CD8-positive, alpha-beta T cell (primary cell): ENCODE measurements at regions of chr2 and their contacts with region 1.

Region 1: GRCh38 chr2:54558188-54559005 is 102.3 kb downstream of the SPTBN1 start:
- DNase-seq: peak; percentile 43 to 85 (median 69)
- ATAC-seq: peak; percentile 67
- H3K4me3 ChIP-seq: peak overlapping the region; percentile 92 to 94
- H3K4me3 Mint-ChIP-seq: peak overlapping the region; percentile 98
- H3K27ac ChIP-seq: peak overlapping the region; percentile 81 to 82
- H3K27ac Mint-ChIP-seq: peak overlapping the region; percentile 93
- H3K4me1 ChIP-seq: peaks cover 35% of the 10 kb centered on the region
- H3K4me1 Mint-ChIP-seq: peaks cover 64% of the 10 kb centered on the region
- H3K27me3 ChIP-seq: no peaks in the 10 kb centered on the region
- H3K27me3 Mint-ChIP-seq: no peaks in the 10 kb centered on the region
- CTCF ChIP-seq: no peak

Region 2: GRCh38 chr2:54570925-54571694 is 12.7 kb after region 1 on chr2:
- CTCF ChIA-PET with region 1: interaction called, 29 read pairs
- POLR2A ChIA-PET with region 1: interaction called, 91 read pairs
- intact Hi-C with region 1: loop called (anchors 1 kb)
- DNase-seq: peak; percentile 23 to 87 (median 69)
- ATAC-seq: peak; percentile 8
- H3K4me3 ChIP-seq: peak overlapping the region; percentile 13 to 21
- H3K4me3 Mint-ChIP-seq: peak overlapping the region; percentile 81
- H3K27ac ChIP-seq: peak overlapping the region; percentile 87 to 94
- H3K27ac Mint-ChIP-seq: peak overlapping the region; percentile 100
- H3K4me1 ChIP-seq: peaks cover 94% of the 10 kb centered on the region
- H3K4me1 Mint-ChIP-seq: peaks cover 95% of the 10 kb centered on the region
- H3K27me3 ChIP-seq: no peaks in the 10 kb centered on the region
- H3K27me3 Mint-ChIP-seq: no peaks in the 10 kb centered on the region
- CTCF ChIP-seq: no peak

Region 3: DNA sequence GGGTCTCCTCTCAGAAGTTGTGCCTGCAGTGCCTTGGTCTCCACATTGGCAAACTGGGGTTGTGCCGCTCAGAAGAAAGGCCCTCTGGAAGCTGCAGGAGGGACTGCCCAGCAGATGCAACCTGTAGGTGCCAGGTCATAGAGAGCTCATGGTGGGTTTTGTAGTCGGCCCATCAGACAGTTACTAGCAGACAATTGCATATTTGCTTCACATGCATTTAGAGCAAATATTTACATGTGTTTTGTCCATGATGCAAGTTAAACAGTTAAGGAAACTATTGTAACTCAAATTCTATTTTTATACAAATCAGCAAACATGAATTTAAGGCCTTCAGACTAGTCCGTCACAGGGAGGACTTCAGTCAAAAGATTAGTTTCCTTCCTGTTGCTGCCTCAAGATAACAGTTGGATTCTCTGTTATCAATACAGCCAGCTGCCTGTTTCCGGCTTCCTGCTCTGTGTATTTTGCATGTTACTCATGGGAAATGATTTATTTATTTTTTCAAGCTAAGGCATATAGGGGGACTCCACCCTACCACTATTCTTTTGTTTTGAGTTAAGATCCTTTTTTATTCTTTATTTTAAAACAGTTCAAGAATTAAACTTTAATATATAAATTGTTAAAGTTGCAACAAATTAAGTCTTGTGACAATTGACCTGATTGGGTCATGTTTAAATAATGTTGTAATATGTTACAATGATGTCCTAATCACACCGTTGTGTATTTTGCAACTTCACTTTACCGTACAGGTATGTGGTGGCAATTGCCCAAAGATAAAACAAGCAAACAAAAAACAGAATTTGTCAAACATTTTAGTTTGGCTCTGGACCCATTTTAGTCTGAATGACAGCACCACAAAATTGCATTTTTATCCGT is 31.2 kb after region 1 on chr2:
- CTCF ChIA-PET with region 1: interaction called, 16 read pairs
- POLR2A ChIA-PET with region 1: interaction called, 34 read pairs
- intact Hi-C with region 1: no loop called
- DNase-seq: peak in 5 of 9 experiments; percentile 43 to 71 (median 48)
- ATAC-seq: peak; percentile 59
- H3K4me3 ChIP-seq: peak overlapping the region in 1 of 2 experiments; percentile 46
- H3K4me3 Mint-ChIP-seq: peak overlapping the region; percentile 72
- H3K27ac ChIP-seq: peak overlapping the region; percentile 60
- H3K27ac Mint-ChIP-seq: peak overlapping the region; percentile 92
- H3K4me1 ChIP-seq: peaks cover 88% of the 10 kb centered on the region
- H3K4me1 Mint-ChIP-seq: peaks cover 96% of the 10 kb centered on the region
- H3K27me3 ChIP-seq: no peaks in the 10 kb centered on the region
- H3K27me3 Mint-ChIP-seq: no peaks in the 10 kb centered on the region
- CTCF ChIP-seq: no peak

Region 4: GRCh38 chr2:54606393-54606969 is 48.1 kb after region 1 on chr2:
- CTCF ChIA-PET with region 1: interaction called, 13 read pairs
- POLR2A ChIA-PET with region 1: interaction called, 36 read pairs
- intact Hi-C with region 1: no loop called
- DNase-seq: peak in 4 of 9 experiments; percentile 17 to 54 (median 44)
- ATAC-seq: peak; percentile 79
- H3K4me3 ChIP-seq: no peak overlapping the region
- H3K4me3 Mint-ChIP-seq: peak overlapping the region; percentile 13
- H3K27ac ChIP-seq: no peak overlapping the region
- H3K27ac Mint-ChIP-seq: peak overlapping the region; percentile 92
- H3K4me1 ChIP-seq: peaks cover 77% of the 10 kb centered on the region
- H3K4me1 Mint-ChIP-seq: peaks cover 86% of the 10 kb centered on the region
- H3K27me3 ChIP-seq: no peaks in the 10 kb centered on the region
- H3K27me3 Mint-ChIP-seq: no peaks in the 10 kb centered on the region
- CTCF ChIP-seq: no peak

Region 5: GRCh38 chr2:54704688-54705605 is 146.6 kb after region 1 on chr2:
- CTCF ChIA-PET with region 1: interaction called, 12 read pairs
- POLR2A ChIA-PET with region 1: interaction called, 4 read pairs
- intact Hi-C with region 1: no loop called
- DNase-seq: peak in 2 of 9 experiments; percentile 71 to 78
- ATAC-seq: peak; percentile 66
- H3K4me3 ChIP-seq: no peak overlapping the region
- H3K4me3 Mint-ChIP-seq: no peak overlapping the region
- H3K27ac ChIP-seq: no peak overlapping the region
- H3K27ac Mint-ChIP-seq: no peak overlapping the region
- H3K4me1 ChIP-seq: no peaks in the 10 kb centered on the region
- H3K4me1 Mint-ChIP-seq: no peaks in the 10 kb centered on the region
- H3K27me3 ChIP-seq: peaks cover 11% of the 10 kb centered on the region in 2 experiments
- H3K27me3 Mint-ChIP-seq: peaks cover 16% of the 10 kb centered on the region
- CTCF ChIP-seq: peak; percentile 81